Posterior cingulate gyrus (tissue), 11 donors: ENCODE measurements at regions of chr3 and their contacts with region 1.

Region 1: GRCh38 chr3:99023590-99024192 is 122.2 kb upstream of the DCBLD2 start:
- DNase-seq: no peak

Region 2: GRCh38 chr3:98977520-98977919 is 46.2 kb before region 1 on chr3:
- intact Hi-C with region 1: no loop called
- DNase-seq: no peak

Region 3: DNA sequence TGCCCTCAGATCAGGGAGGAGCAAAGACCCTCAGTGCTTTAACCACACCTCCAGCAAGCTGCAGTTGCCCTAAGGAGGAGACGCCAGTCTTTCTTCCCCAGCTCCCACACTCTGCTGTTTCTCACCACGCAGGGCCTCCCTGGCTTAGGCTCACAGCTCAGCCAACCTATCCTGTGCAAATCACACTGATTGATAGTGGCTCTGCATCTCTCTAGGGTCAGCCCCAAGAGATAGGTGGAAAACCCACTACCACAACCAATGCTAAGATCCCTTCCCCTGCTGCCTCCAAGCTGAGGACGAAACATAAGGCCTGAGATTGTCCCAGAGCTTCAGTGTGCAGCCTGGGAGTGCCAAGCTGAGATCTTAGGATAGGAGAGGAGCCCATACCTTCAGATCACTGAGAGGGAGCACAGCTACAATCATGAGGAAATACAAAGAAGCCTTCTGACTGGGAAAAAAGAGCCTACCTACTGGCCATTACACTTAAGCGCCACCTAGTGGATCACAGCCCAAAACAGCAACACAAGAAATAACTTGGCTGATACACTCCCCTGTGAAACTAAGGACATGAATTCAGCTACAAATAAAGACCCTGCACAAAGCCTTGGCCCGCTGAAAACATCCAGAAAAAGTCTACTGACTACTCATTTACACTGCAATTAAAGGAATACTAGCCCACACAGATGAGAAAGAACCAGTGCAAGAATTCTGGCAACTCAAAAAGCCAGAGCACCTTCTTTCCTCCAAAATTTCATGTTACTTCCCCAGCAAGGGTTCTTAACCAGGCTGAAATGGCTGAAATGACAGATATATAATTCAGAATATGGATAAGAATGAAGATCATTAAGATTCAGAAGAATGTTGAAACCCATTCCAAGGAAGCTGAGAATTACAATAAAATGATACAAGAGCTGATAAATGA is 149.3 kb after region 1 on chr3:
- intact Hi-C with region 1: loop called (anchors 1 kb)
- DNase-seq: peak in 5 of 10 donors; percentile 16 to 69 (median 40)

Region 4: DNA sequence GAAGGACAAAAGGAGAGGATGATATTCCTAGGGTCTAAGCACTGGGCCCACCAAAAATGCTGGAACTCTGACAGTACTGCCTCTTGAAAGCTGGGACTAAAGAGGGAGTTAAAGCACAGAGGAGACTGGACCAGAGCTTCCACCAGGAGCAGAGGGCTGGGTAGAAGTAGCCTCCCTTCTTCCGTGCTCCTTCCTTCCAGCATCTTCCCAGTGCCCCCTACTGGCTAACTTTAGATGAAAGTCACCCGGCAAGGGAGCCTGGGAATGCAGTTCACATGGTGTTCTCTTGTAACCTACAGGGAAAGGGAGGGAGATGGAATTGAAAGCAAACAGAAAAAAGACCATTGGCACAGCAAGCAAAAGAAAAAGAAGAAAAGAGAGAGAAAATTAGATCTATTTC is 508.6 kb after region 1 on chr3:
- intact Hi-C with region 1: loop called (anchors 10 kb)
- DNase-seq: peak in 5 of 10 donors; percentile 6 to 57 (median 37)

Region 5: DNA sequence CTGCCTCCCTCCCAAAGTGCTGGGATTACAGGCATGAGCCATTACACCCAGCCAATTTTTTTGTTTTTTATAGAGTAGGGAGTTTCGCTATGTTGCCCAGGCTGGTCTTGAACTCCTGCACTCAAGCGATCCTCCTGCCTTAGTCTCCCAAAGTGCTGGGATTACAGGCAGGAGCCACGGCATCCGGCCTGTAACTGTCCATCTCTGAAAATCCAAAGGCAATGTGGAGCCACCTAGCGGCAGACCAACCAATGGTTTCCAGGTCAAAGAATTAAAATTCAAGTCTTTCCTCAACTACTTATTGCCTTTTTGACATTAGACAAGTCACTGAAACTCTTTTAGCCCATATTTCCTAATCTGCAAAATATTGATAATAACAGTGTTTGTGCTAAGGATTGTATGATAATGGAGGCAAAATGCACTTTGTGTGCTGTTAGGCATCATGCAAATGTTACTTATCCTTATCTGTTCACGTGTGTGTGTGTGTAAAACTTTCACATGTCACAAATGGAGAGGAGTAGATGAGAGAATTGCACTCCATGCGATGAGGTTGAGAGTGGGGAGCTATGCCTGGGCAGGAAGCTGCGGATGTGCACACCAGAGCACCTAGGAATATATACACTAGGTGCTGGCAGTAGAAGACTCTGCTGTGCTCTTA is 663.4 kb after region 1 on chr3:
- intact Hi-C with region 1: loop called (anchors 10 kb)
- DNase-seq: peak in 7 of 10 donors; percentile 26 to 82 (median 56)

Region 6: GRCh38 chr3:99753268-99753975 is 729.7 kb after region 1 on chr3:
- intact Hi-C with region 1: loop called (anchors 2 kb)
- DNase-seq: peak in 6 of 10 donors; percentile 13 to 75 (median 20)